ENCODE measurements at regions of chr4 and their contacts with region 1.

Region 1: DNA sequence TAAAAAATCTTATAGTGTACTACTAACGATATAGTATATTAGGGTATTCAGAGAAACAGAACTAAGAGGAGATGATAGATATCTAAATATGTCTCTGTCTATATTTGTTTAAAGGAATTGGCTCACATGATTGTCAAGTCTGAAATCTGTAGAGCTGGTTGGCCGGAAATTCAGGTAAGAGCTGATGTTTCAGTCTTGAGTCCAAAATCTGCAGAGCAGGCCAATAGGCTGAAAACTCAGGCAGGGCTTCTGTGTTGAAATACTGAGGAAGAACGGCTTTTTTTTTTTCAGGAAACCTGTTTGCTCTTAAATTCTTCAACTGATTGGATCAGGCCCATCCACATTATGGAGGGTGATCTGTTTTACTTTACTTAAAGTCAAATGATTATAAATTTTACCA is 31.7 kb downstream of the PGRMC2 start:
- DNase-seq: no peak
- H3K4me3 ChIP-seq: no peak overlapping the region
- H3K27ac ChIP-seq: no peak overlapping the region
- H3K4me1 ChIP-seq: no peaks in the 10 kb centered on the region
- H3K27me3 ChIP-seq: no peaks in the 10 kb centered on the region
- CTCF ChIP-seq: no peak
- POLR2A ChIP-seq: no peak

Region 2: DNA sequence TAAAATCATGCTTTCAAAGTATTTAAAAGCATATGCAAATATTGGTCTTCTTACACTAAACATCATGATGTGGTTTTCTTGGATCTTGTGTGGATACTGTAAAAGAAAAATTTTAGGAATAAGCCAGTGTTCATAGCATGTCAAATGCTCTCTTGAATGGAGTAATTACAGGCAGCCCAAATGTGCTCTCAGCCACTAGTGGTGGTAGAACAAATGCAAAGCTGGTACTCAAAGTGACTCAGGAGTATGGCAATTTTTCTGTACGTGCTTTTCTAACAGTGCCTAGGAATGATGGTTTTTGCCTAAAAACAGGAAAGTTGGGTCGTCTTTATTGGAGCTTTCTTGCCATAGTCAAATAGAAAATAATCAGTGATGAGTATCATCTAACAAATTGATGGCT is 11.8 kb after region 1 on chr4:
- intact Hi-C with region 1: loop called (anchors 1 kb)
- DNase-seq: no peak
- H3K4me3 ChIP-seq: no peak overlapping the region
- H3K27ac ChIP-seq: no peak overlapping the region
- H3K4me1 ChIP-seq: no peaks in the 10 kb centered on the region
- H3K27me3 ChIP-seq: no peaks in the 10 kb centered on the region
- CTCF ChIP-seq: no peak
- POLR2A ChIP-seq: no peak